ENCODE measurements at regions of chr2 and their contacts with region 1.

Region 1: GRCh38 chr2:6865346-6866274 is at the start of gene CMPK2:
- DNase-seq: peak; percentile 98
- H3K4me3 Mint-ChIP-seq: peak within 1 kb of the TSS; percentile 95
- H3K27ac Mint-ChIP-seq: peak within 1 kb of the TSS; percentile 94
- H3K4me1 Mint-ChIP-seq: peaks cover 49% of the 10 kb centered on the region
- H3K27me3 Mint-ChIP-seq: no peaks in the 10 kb centered on the region
- total RNA-seq, gene CMPK2: 6.4 and 6.9 TPM in 2 replicates

Region 2: DNA sequence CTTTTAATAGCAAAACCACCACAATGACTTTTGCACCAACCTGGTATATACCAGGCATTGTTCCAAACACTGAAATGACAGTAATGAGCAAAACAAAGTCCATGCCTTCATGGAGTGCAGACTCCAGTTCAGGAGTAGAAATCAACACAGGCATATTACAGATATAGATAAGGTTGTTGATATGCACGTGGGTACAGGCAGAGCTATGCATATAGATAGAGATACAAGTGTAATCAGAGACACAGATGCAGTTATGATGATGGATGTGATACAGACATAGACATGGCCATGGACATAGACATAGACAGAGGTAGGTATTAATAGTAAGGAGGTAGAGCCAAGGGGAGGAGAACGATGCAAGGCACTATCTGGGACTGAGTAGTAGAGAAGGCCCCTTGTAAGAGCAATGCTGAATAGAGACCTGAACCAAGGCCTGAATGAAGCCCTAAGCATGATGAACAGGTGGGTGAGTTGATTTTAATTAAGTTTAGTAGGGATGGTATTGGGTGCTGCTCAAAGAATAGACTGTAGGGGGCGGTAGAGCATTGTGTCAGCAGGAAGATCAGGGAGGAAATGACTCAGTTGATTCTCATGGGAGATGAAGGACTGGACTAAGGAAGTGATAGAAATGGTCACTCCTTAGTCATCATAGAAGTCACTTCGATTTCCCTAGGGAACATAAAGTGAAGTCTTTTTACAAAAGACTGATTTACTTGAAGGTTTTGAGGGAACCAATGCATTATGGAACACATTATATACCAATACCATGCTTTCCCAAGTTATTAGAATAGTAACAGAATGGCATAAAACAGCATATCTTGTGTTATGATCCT is 39.3 kb before region 1 on chr2:
- intact Hi-C with region 1: loop called (anchors 1 kb)
- DNase-seq: peak; percentile 89
- H3K4me3 Mint-ChIP-seq: no peak overlapping the region
- H3K27ac Mint-ChIP-seq: no peak overlapping the region
- H3K4me1 Mint-ChIP-seq: peaks cover 14% of the 10 kb centered on the region
- H3K27me3 Mint-ChIP-seq: peaks cover 11% of the 10 kb centered on the region

Region 3: DNA sequence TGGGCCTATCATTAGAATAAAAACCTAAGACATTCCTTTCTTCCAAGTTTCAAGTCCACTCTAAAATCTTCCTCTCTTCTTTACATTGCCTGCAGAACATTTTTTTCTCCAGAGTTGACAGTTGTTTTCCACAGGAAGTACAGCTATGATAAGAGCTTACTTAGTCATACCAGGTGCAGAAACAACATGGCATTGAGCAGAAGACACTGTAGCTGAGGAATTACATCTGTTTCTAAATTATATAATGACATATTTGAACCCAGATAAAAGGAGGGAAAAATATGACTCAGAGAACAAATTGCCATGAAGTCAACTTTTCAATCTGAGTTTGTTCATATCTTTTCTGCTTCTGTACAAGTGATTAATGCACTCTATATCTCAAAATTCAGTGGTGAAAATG is 30.1 kb before region 1 on chr2:
- intact Hi-C with region 1: loop called (anchors 1 kb)
- DNase-seq: no peak
- H3K4me3 Mint-ChIP-seq: no peak overlapping the region
- H3K27ac Mint-ChIP-seq: peak overlapping the region; percentile 30
- H3K4me1 Mint-ChIP-seq: peaks cover 21% of the 10 kb centered on the region
- H3K27me3 Mint-ChIP-seq: no peaks in the 10 kb centered on the region

Region 4: GRCh38 chr2:6845903-6846302 is 19.7 kb before region 1 on chr2:
- intact Hi-C with region 1: loop called (anchors 2 kb)
- DNase-seq: no peak
- H3K4me3 Mint-ChIP-seq: no peak overlapping the region
- H3K27ac Mint-ChIP-seq: no peak overlapping the region
- H3K4me1 Mint-ChIP-seq: peaks cover 21% of the 10 kb centered on the region
- H3K27me3 Mint-ChIP-seq: no peaks in the 10 kb centered on the region

Region 5: GRCh38 chr2:6877402-6878304 is 12.0 kb after region 1 on chr2 and contains the start of gene RSAD2:
- intact Hi-C with region 1: loop called (anchors 1 kb)
- DNase-seq: peak; percentile 88
- H3K4me3 Mint-ChIP-seq: peak within 1 kb of the TSS; percentile 90
- H3K27ac Mint-ChIP-seq: peak within 1 kb of the TSS; percentile 85
- H3K4me1 Mint-ChIP-seq: peaks cover 74% of the 10 kb centered on the region
- H3K27me3 Mint-ChIP-seq: no peaks in the 10 kb centered on the region
- total RNA-seq, gene RSAD2: 2.0 and 2.4 TPM in 2 replicates

Region 6: DNA sequence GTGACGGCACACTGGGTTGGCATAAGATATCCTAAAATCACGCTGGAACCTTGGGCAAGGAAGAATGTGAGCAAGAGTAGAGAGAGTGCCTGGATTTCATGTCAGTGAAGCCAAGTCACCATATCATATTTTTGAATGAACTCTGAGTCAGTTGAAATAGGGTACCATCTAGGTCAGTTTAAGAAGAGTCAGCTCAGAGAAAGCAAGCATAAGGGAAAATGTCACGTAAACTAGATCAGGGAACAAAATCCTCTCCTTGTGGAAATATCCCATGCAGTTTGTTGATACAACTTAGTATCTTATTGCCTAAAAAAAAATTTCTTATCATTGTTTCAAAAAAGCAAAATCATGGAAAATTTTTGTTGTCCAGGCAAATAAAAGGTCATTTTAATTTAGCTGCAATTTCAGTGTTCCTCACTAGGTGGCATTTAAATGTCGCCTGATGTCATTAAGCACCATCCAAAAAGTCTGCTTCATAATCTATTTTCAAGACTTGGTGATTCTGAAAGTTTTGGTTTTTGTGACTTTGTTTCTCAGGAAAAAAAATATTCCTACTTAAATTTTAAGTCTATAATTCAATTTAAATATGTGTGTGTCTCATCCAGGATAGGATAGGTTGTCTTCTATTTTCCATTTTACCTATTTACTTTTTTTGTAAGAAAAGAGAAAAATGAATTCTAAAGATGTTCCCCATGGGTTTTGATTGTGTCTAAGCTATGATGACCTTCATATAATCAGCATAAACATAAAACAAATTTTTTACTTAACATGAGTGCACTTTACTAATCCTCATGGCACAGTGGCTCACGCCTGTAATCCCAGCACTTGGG is 31.5 kb after region 1 on chr2:
- intact Hi-C with region 1: loop called (anchors 1 kb)
- DNase-seq: no peak
- H3K4me3 Mint-ChIP-seq: no peak overlapping the region
- H3K27ac Mint-ChIP-seq: peak overlapping the region; percentile 21
- H3K4me1 Mint-ChIP-seq: peaks cover 17% of the 10 kb centered on the region
- H3K27me3 Mint-ChIP-seq: no peaks in the 10 kb centered on the region

Region 7: DNA sequence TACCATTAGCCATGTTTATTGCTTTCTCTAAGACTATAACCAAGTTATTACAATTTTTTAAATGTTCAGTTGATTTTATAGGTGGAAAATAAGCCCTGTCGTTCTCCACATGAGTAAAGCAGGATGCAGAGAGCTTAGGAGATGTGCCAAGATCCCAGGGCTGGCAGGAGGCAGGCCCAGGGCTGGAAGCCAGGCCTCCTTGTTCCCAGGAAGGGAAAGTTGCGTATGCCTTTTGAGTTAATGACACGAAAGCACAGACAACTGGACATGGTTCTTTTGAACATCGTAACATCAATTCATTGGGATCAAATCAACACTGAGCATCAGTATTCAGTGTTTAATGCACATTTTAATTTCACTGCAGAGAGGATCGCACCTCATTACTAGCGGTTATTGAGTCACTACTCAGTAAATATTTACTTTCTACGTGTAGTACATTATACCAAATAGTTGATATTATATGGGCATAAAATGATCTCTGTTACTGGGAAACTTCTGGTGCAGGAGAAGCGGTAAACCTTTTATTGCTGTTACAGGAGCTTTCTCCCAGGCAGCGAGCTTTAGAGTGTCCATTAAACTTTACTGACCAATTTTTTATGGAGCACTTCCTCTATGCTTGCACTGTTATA is 111.6 kb after region 1 on chr2:
- intact Hi-C with region 1: no loop called
- DNase-seq: no peak
- H3K4me3 Mint-ChIP-seq: no peak overlapping the region
- H3K27ac Mint-ChIP-seq: no peak overlapping the region
- H3K4me1 Mint-ChIP-seq: peaks cover 3% of the 10 kb centered on the region
- H3K27me3 Mint-ChIP-seq: no peaks in the 10 kb centered on the region